B cell (primary cell): ENCODE measurements at regions of chr2 and their contacts with region 1.

Region 1: GRCh38 chr2:216498418-216499413 is at the start of gene RPL37A:
- DNase-seq: peak; percentile 94
- ATAC-seq: peak; percentile 97
- H3K4me3 ChIP-seq: peak within 1 kb of the TSS; percentile 65 to 96 (median 92)
- H3K4me3 Mint-ChIP-seq: peak within 1 kb of the TSS; percentile 98
- H3K27ac ChIP-seq: peak within 1 kb of the TSS; percentile 79 to 92
- H3K27ac Mint-ChIP-seq: peak within 1 kb of the TSS; percentile 97
- H3K4me1 ChIP-seq: peaks cover 24 to 25% of the 10 kb centered on the region in 2 donors
- H3K4me1 Mint-ChIP-seq: peaks cover 67% of the 10 kb centered on the region
- H3K27me3 ChIP-seq: no peaks in the 10 kb centered on the region
- H3K27me3 Mint-ChIP-seq: no peaks in the 10 kb centered on the region
- CTCF ChIP-seq: no peak
- total RNA-seq, gene RPL37A: 3,163 and 3,456 TPM in 2 replicates

Region 2: DNA sequence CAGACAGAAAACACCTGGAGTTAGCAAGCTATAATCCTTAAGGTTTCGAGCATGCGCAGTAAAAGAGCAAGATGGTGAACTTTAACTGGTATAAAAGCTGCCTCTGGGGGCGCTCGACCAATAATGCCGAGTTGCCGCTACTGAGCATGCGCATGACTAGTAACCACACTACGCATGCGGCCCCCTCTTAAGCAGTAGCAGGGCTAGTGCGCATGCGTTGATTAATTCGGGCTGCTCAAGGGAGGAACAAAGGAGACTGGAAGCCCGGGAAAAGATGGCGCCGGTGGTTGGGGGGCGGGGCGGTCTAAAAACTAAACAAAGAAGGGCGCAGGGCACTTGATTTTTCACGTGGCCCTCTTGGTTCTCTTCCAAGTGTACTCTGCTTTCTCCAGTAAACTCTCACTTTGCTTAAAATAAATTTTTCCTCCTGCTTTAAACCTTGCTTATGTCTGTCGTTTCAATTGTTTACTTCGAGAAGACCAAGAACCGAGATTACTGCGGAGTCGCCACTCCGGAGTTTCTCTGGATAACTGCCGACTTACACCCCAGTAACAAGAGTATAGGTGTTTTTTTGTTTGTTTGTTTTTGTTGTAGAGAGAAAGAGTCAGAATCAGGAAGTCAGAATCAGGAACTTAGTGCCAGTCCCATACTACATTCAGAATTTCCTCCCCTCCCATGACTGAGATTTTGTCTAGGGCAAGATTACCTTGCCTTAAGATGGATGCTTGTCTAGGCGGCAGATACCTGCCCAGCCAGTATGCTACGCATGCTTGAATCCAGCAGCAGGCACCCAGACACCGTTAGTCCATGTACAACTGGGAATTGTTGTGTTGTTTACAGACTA is 383.8 kb before region 1 on chr2:
- CTCF ChIA-PET with region 1: no interaction called
- POLR2A ChIA-PET with region 1: interaction called, 3 read pairs
- intact Hi-C with region 1: loop called (anchors 2 kb)
- DNase-seq: peak; percentile 99
- ATAC-seq: peak; percentile 90
- H3K4me3 ChIP-seq: peak overlapping the region; percentile 52 to 90 (median 69)
- H3K4me3 Mint-ChIP-seq: peak overlapping the region; percentile 93
- H3K27ac ChIP-seq: peak overlapping the region; percentile 80 to 96
- H3K27ac Mint-ChIP-seq: peak overlapping the region; percentile 98
- H3K4me1 ChIP-seq: peaks cover 32 to 37% of the 10 kb centered on the region in 2 donors
- H3K4me1 Mint-ChIP-seq: peaks cover 71% of the 10 kb centered on the region
- H3K27me3 ChIP-seq: no peaks in the 10 kb centered on the region
- H3K27me3 Mint-ChIP-seq: no peaks in the 10 kb centered on the region
- CTCF ChIP-seq: peak; percentile 88